Activated CD4-positive, alpha-beta T cell treated with anti-CD3 and anti-CD28 coated beads, Interleukin-2, amount 10 ng/mL, durations not matched to agents 7 days and 5 days (primary cell): ENCODE measurements at regions of chr18 and their contacts with region 1.

Region 1: GRCh38 chr18:35343936-35344735 is at the start of gene ZNF24:
- DNase-seq: peak; percentile 93
- H3K4me3 Mint-ChIP-seq: peak within 1 kb of the TSS; percentile 99
- H3K27ac Mint-ChIP-seq: peak within 1 kb of the TSS; percentile 97
- H3K4me1 Mint-ChIP-seq: peaks cover 42% of the 10 kb centered on the region
- H3K27me3 Mint-ChIP-seq: no peaks in the 10 kb centered on the region
- total RNA-seq, gene ZNF24: 46.9 to 58.9 TPM

Region 2: DNA sequence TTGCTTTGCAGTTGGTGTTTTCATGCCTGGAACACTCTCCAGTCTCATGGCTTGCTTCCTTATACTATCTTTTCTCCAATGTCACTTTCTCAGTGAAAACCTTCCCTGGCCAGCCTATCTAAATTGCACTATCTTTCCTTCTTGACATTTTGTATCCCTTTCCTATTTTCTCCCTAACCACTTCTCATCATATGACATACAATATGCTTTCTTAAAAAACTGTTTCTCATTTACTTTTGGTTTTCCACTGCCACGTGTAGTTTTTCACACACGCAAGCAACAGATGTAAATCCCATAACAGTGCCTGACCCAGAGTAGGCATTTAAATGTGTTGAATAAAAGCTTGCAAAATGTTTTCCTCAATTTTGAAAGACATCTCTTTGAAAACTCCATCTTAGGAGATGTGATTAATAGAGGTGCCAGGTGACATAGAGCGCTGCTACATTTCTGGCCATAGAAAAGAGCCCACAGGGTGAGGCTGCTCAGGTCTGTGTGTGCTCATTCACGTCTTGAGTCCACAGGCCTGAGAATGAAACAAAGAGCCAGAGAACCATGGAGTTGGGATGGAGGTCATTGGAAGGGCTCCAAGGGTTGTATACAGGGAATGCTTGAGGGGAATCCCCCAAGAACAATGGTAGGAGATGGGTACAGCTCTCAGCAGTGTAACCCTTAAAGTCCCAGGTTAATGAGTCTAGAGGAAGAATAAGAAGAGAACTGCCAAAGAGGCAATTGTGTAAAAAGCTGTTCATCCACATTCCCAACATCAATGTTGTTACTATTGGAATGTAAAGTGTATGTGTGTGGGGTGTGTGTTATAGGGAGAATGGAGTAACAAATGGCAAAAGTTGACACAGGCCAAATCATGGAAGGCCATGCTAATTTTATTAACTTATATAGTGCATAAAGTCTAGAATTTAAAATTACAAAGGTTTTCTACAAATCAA is 12.5 kb before region 1 on chr18:
- CTCF ChIA-PET with region 1: no interaction called
- POLR2A ChIA-PET with region 1: no interaction called
- DNase-seq: no peak
- H3K4me3 Mint-ChIP-seq: no peak overlapping the region
- H3K27ac Mint-ChIP-seq: no peak overlapping the region
- H3K4me1 Mint-ChIP-seq: no peaks in the 10 kb centered on the region
- H3K27me3 Mint-ChIP-seq: no peaks in the 10 kb centered on the region

Region 3: GRCh38 chr18:35355140-35355618 is 11.0 kb after region 1 on chr18:
- CTCF ChIA-PET with region 1: interaction called, 14 read pairs
- POLR2A ChIA-PET with region 1: no interaction called
- DNase-seq: peak; percentile 64
- H3K4me3 Mint-ChIP-seq: no peak overlapping the region
- H3K27ac Mint-ChIP-seq: no peak overlapping the region
- H3K4me1 Mint-ChIP-seq: peaks cover 5% of the 10 kb centered on the region
- H3K27me3 Mint-ChIP-seq: no peaks in the 10 kb centered on the region